ENCODE measurements at regions of chr5 and their contacts with region 1.

Region 1: GRCh38 chr5:115634343-115635132 is 8.7 kb upstream of the TMED7 start:
- DNase-seq: peak; percentile 76
- CTCF ChIP-seq: peak; percentile 92

Region 2: GRCh38 chr5:115831163-115831768 is 196.7 kb after region 1 on chr5:
- CTCF ChIA-PET with region 1: interaction called, 14 read pairs
- POLR2A ChIA-PET with region 1: no interaction called
- DNase-seq: peak; percentile 44
- CTCF ChIP-seq: peak; percentile 80

Region 3: GRCh38 chr5:115841382-115842088 is 207.0 kb after region 1 on chr5 and contains the starts of genes AP3S1 and ATG12:
- CTCF ChIA-PET with region 1: interaction called, 14 read pairs
- POLR2A ChIA-PET with region 1: no interaction called
- DNase-seq: peak; percentile 89
- CTCF ChIP-seq: no peak

Measured in GM10248 (cell line).